T-cell (primary cell): ENCODE measurements at regions of chr9 and their contacts with region 1.

Region 1: DNA sequence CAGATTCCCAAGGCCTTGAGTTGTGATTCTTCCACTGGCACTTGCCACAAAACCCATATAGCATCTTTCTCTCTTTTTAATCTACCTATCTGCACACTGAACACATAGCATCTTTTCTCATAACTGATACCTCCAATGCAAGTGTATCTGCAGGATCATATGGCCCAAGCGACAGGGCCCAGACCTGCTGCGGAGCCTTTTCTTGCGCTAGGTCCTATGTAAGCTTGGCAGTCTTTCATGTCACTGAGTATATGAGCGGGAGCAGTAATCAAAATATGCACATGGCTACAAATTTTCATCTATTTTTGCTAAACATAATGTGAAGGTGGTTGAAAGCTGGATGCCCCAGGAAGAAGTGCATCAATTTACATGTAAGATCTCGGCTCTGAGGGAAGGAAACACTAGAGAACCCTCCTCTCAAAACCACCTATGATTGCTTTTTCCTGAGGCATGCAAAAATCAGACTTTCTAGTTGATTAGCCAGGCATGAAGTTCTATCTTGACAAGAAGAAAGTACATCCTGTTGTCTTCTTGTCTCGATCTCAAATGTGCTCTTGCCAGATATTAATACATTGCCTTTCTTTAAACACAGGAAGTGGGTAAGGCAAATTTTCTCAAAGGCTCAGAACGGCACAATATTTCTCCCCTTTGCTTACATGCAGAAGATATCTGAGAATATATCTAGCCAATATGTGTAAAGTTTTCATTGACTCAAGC is 26.9 kb upstream of the CEMIP2 start:
- DNase-seq: peak in 21 of 35 experiments; percentile 9 to 79 (median 22)
- ATAC-seq: peak; percentile 91 to 94 (median 93)
- H3K4me3 ChIP-seq: peak overlapping the region in 1 of 2 donors; percentile 19
- H3K4me3 Mint-ChIP-seq: peak overlapping the region; percentile 42 to 71 (median 62)
- H3K27ac ChIP-seq: peak overlapping the region; percentile 69
- H3K27ac Mint-ChIP-seq: peak overlapping the region; percentile 99 to 100
- H3K4me1 ChIP-seq: peaks cover 46 to 54% of the 10 kb centered on the region in 2 experiments
- H3K4me1 Mint-ChIP-seq: peaks cover 68 to 75% (median 74%) of the 10 kb centered on the region in 3 donors
- H3K27me3 ChIP-seq: no peaks in the 10 kb centered on the region
- H3K27me3 Mint-ChIP-seq: no peaks in the 10 kb centered on the region

Region 2: GRCh38 chr9:71741711-71742648 is 53.3 kb before region 1 on chr9:
- CTCF ChIA-PET with region 1: no interaction called
- POLR2A ChIA-PET with region 1: no interaction called
- DNase-seq: no peak
- ATAC-seq: no peak
- H3K4me3 ChIP-seq: no peak overlapping the region
- H3K4me3 Mint-ChIP-seq: no peak overlapping the region
- H3K27ac ChIP-seq: no peak overlapping the region
- H3K27ac Mint-ChIP-seq: no peak overlapping the region
- H3K4me1 ChIP-seq: no peaks in the 10 kb centered on the region
- H3K4me1 Mint-ChIP-seq: peaks cover 10 to 34% (median 18%) of the 10 kb centered on the region in 3 donors
- H3K27me3 ChIP-seq: no peaks in the 10 kb centered on the region
- H3K27me3 Mint-ChIP-seq: no peaks in the 10 kb centered on the region

Region 3: GRCh38 chr9:71806901-71807307 is 11.6 kb after region 1 on chr9:
- CTCF ChIA-PET with region 1: interaction called, 3 to 12 read pairs
- POLR2A ChIA-PET with region 1: interaction called, 3 to 5 read pairs
- DNase-seq: peak; percentile 23 to 77 (median 47)
- ATAC-seq: peak; percentile 74 to 93 (median 90)
- H3K4me3 ChIP-seq: no peak overlapping the region
- H3K4me3 Mint-ChIP-seq: no peak overlapping the region
- H3K27ac ChIP-seq: no peak overlapping the region
- H3K27ac Mint-ChIP-seq: peak overlapping the region; percentile 21 to 40
- H3K4me1 ChIP-seq: peaks cover 4 to 5% of the 10 kb centered on the region in 2 experiments
- H3K4me1 Mint-ChIP-seq: peaks cover 11 to 15% (median 13%) of the 10 kb centered on the region in 3 donors
- H3K27me3 ChIP-seq: no peaks in the 10 kb centered on the region
- H3K27me3 Mint-ChIP-seq: no peaks in the 10 kb centered on the region